Posterior cingulate gyrus (tissue), 11 donors: ENCODE measurements at regions of chr21 and their contacts with region 1.

Region 1: DNA sequence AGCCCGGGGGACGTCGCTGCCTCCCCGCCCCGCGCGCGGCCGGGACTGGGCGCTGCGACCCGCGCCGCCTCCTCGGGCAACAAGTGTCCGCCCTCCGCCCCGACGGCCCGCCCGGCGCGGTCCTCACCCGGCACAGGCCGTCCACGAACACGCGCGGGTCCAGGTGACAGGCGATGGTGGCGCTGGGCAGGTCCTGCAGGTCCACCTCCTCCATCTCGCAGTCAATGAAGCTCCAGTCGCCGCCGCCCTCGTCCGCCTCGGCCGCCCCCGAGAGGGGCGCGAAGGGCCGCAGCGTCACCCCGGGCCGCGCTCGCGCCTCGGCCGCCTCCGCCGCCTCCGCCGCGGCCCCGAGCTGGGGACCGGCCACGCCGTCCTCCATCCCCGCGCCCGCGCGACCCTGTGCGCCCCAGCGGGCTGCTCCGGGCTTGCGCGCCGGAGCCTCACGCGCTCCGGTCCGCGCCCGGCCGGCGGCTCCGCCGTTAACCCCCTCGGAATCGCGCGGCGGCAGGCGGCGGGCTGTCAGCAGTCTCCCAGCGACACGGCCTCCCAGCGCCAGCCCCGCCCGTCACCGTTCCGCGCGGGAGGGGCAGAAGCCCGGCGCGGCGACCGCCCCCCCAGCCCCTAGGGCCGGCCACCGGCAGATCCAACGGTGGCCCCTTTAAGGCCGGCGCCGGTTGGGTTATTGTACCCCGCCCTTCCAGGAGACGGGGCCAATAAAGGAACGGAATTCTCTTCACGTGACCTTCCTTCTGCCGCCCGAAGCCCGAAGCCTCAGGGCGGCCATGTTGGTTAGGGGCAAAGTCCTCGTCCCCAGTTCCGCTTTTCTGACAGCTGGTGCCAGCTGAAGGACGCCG is at the start of gene RCAN1:
- DNase-seq: peak; percentile 84 to 99 (median 92)

Region 2: DNA sequence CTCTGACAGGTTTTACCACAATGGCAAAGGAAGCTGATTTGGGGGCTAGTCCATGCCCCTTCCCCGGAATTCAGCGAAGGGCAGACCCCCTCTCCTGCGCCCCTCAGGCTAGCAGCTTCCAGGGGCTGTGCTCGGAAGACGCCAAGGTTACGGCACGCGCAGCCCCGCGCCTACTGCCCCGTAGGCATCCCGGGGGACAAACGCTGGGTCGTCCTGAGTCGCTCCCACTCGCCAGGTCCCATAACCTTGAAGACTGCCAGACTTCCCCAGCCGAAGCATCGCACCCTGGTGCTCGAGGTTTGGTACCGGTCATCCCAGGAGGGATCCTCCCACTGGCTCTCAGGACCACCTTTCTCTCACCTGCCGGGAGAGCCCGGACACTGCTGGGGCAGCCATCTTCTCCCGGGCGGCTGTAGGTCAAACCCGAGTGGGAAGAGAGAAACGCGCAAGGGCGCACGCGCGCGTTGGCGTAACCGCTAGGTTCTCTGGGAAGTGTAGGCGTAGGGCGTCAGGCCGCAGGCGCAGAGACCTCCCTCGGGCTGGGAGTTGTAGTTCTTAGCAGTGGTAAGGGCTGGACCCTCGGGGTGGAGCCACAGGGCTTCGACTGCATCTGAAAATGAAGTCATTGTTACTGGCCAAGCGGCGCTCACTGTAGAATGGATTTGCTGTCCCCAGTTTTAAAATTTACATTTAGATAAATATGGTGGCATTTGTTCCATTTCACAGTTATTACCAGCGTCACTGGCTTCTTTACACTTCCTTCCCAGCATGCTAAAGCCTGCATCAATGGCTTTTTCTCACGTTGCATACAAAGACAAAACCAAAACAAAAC is 699.3 kb before region 1 on chr21 and contains the start of gene ATP5PO:
- intact Hi-C with region 1: loop called (anchors 10 kb)
- DNase-seq: peak; percentile 95 to 100 (median 98)

Region 3: DNA sequence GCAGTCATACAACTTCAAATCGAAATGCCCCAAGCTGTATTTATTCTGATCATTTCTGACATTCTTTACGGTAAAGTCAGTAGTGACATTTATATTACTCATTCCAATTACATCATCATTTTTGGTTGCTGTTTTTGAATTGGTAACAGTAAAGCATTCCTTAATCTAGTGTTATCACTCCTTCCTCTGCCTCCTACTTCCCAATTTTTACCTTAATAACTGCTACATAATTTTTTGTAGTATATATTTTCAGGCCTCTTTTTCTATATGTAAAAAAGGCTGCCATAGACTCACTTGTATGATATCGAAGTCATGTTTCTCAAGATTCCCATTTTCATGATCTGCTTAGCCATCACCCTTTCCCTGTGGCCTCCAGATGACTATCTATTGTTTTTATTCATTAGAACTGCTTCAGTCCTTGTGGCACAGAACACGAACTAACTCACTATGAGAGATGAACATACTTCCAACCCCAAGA is 267.1 kb after region 1 on chr21:
- intact Hi-C with region 1: no loop called
- DNase-seq: no peak